CD4-positive, alpha-beta memory T cell (primary cell): ENCODE measurements at regions of chr2 and their contacts with region 1.

Region 1: DNA sequence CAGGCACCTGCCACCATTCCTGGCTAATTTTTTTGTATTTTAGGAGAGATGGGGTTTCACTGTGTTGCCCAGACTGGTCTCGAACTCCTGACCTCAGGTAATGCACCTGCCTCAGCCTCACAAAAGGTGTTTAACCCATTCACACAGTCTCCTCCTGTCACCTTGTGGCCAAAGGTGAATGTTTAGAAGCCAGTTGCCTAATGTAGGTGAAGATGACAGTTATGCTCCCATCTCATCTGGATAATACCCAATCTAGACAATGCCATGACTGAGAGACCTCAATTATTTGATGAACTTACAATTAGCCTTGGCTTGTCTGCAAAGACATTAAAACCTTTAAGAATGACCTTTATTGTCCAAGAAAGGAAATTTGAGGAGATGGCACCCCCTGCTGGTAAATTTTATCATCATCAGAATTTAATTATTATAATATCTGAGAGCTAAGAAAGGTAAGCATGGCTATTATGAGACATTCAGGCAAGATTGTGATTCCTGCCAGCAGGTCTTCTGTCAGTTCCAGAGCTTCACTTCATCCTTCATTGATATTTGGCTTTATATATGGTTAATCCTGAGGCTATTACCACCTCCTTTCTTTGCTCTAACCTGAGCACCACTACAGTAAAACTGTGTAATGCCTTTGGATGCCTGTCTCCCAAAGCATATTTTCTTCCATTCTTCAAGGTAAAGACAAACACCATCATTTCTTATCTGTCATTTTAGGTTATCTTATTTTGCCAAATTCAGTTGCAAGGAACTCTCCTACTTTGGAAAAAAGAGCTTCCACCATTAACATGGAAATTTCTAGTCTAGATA is 117.6 kb downstream of the FAM124B start:
- DNase-seq: peak in 4 of 5 donors; percentile 30 to 44 (median 33)
- H3K4me3 ChIP-seq: no peak overlapping the region
- H3K4me3 Mint-ChIP-seq: no peak overlapping the region
- H3K27ac ChIP-seq: no peak overlapping the region
- H3K27ac Mint-ChIP-seq: no peak overlapping the region
- H3K4me1 ChIP-seq: no peaks in the 10 kb centered on the region
- H3K4me1 Mint-ChIP-seq: no peaks in the 10 kb centered on the region
- H3K27me3 ChIP-seq: no peaks in the 10 kb centered on the region
- H3K27me3 Mint-ChIP-seq: peaks cover 26 to 31% of the 10 kb centered on the region in 2 donors

Region 2: DNA sequence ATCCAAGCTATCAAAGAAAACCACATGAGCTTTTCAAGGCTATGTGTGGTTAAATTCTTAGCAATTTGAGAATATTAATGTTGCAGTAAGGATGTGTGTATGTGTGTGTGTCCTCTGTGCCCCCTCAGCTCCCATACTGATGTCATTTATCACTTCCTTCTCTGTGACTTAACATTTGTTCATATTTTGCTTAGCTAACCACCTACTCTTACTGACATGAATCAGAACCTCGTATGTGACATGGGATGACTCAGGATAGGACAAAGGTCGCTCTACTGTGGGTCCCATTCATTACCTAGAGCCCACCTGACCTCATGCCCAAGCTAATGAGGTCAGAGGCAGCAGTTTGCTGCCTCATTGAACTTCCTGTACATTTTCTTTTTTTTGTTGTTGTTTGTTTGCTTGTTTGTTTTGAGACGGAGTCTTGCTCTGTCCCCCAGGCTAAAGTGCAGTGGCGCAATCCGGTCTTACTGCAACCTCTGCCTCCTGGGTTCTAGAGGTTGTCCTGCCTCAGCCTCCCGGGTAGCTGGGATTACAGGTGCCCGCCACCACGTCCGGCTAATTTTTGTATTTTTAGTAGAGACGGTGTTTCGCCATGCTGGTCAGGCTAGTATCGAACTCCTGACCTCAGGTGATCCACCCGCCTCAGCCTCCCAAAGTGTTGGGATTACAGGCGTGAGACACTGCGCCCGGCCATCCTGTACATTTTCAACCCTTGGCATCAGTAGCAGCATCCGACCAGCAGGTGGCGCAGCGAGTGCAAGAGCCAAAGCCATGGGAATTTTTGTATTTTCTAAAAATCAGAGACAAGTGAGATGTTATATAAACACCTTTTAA is 1576.4 kb before region 1 on chr2:
- CTCF ChIA-PET with region 1: no interaction called
- POLR2A ChIA-PET with region 1: no interaction called
- intact Hi-C with region 1: loop called (anchors 5 kb)
- DNase-seq: peak; percentile 53 to 64 (median 59)
- H3K4me3 ChIP-seq: no peak overlapping the region
- H3K4me3 Mint-ChIP-seq: no peak overlapping the region
- H3K27ac ChIP-seq: no peak overlapping the region
- H3K27ac Mint-ChIP-seq: peak overlapping the region in 1 of 7 donors; percentile 48
- H3K4me1 ChIP-seq: peaks cover 6% of the 10 kb centered on the region
- H3K4me1 Mint-ChIP-seq: no peaks in the 10 kb centered on the region
- H3K27me3 ChIP-seq: no peaks in the 10 kb centered on the region
- H3K27me3 Mint-ChIP-seq: peaks cover 29 to 36% of the 10 kb centered on the region in 2 donors

Region 3: GRCh38 chr2:223779877-223780276 is 504.5 kb before region 1 on chr2:
- CTCF ChIA-PET with region 1: interaction called, 4 read pairs
- POLR2A ChIA-PET with region 1: no interaction called
- intact Hi-C with region 1: loop called (anchors 1 kb)
- DNase-seq: peak; percentile 40 to 51 (median 41)
- H3K4me3 ChIP-seq: no peak overlapping the region
- H3K4me3 Mint-ChIP-seq: no peak overlapping the region
- H3K27ac ChIP-seq: no peak overlapping the region
- H3K27ac Mint-ChIP-seq: no peak overlapping the region
- H3K4me1 ChIP-seq: no peaks in the 10 kb centered on the region
- H3K4me1 Mint-ChIP-seq: no peaks in the 10 kb centered on the region
- H3K27me3 ChIP-seq: no peaks in the 10 kb centered on the region
- H3K27me3 Mint-ChIP-seq: no peaks in the 10 kb centered on the region

Region 4: DNA sequence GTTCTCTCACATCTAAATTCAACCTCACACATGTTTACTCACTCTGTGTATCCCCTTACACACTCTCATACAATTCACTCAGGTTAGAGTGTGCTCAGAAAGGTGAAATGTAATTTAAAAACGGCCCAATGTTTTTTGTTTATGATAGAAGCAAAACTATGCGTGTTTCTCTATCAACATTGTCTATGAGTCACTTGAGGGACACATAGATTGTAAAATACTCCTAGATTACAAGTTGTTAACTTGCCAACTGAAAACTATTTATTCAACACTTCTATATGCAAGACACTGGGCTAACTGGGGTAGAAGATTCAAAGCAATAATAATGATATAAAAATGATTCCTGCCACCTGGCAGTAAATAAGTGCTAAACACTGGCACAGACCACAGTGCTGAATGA is 407.2 kb after region 1 on chr2:
- CTCF ChIA-PET with region 1: no interaction called
- POLR2A ChIA-PET with region 1: no interaction called
- intact Hi-C with region 1: no loop called
- DNase-seq: no peak
- H3K4me3 ChIP-seq: no peak overlapping the region
- H3K4me3 Mint-ChIP-seq: no peak overlapping the region
- H3K27ac ChIP-seq: no peak overlapping the region
- H3K27ac Mint-ChIP-seq: no peak overlapping the region
- H3K4me1 ChIP-seq: no peaks in the 10 kb centered on the region
- H3K4me1 Mint-ChIP-seq: no peaks in the 10 kb centered on the region
- H3K27me3 ChIP-seq: no peaks in the 10 kb centered on the region
- H3K27me3 Mint-ChIP-seq: peaks cover 2 to 3% of the 10 kb centered on the region in 2 donors